ENCODE measurements at regions of chr6 and their contacts with region 1.

Region 1: GRCh38 chr6:37882724-37883413 is 63.3 kb downstream of the ZFAND3 start:
- DNase-seq: no peak
- ATAC-seq: no peak

Region 2: GRCh38 chr6:38001386-38001785 is 118.5 kb after region 1 on chr6:
- intact Hi-C with region 1: loop called (anchors 5 kb)
- DNase-seq: no peak
- ATAC-seq: no peak

Region 3: GRCh38 chr6:38117281-38117680 is 234.4 kb after region 1 on chr6:
- intact Hi-C with region 1: no loop called
- DNase-seq: no peak
- ATAC-seq: no peak